ENCODE measurements at regions of chr10 and their contacts with region 1.

Region 1: DNA sequence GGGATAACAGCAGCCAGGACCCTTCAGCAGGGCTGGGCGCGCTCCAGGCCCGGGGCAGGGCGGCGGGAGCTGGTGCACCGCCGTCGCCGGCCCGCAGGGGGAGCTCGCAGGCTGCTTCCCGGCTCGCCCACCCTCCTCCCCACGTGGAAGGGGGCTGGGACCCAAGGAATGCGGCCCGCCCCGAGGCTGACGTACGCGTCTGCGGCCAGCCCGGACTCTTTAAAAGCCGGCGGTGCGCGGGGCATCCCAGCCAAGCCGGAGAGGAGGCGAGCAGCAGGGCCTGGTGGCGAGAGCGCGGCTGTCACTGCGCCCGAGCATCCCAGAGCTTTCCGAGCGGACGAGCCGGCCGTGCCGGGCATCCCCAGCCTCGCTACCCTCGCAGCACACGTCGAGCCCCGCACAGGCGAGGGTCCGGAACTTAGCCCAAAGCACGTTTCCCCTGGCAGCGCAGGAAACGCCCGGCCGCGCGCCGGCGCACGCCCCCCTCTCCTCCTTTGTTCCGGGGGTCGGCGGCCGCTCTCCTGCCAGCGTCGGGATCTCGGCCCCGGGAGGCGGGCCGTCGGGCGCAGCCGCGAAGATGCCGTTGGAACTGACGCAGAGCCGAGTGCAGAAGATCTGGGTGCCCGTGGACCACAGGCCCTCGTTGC is at the start of gene PFKFB3:
- DNase-seq: peak; percentile 66 to 99 (median 77)
- ATAC-seq: peak; percentile 81
- H3K4me3 ChIP-seq: peak within 1 kb of the TSS; percentile 84
- H3K4me3 Mint-ChIP-seq: peak within 1 kb of the TSS; percentile 92 to 100 (median 97)
- H3K27ac ChIP-seq: peak within 1 kb of the TSS; percentile 70
- H3K27ac Mint-ChIP-seq: peak within 1 kb of the TSS; percentile 81 to 97 (median 93)
- H3K4me1 ChIP-seq: peaks cover 0 to 12% of the 10 kb centered on the region in 2 donors
- H3K4me1 Mint-ChIP-seq: peaks cover 14 to 44% (median 35%) of the 10 kb centered on the region in 7 donors
- H3K27me3 ChIP-seq: no peaks in the 10 kb centered on the region
- H3K27me3 Mint-ChIP-seq: no peaks in the 10 kb centered on the region
- total RNA-seq, gene PFKFB3: 65.9 to 129 (median 80.5) TPM

Region 2: GRCh38 chr10:6014241-6014761 is 188.5 kb before region 1 on chr10:
- CTCF ChIA-PET with region 1: interaction called, 3 read pairs
- POLR2A ChIA-PET with region 1: no interaction called
- intact Hi-C with region 1: loop called in 1 of 2 experiments (anchors 10 kb)
- DNase-seq: peak in 7 of 9 donors; percentile 73 to 89 (median 86)
- ATAC-seq: peak; percentile 98
- H3K4me3 ChIP-seq: no peak overlapping the region
- H3K4me3 Mint-ChIP-seq: peak overlapping the region in 9 of 10 donors; percentile 5 to 61 (median 36)
- H3K27ac ChIP-seq: peak overlapping the region; percentile 82
- H3K27ac Mint-ChIP-seq: peak overlapping the region; percentile 85 to 99 (median 96)
- H3K4me1 ChIP-seq: peaks cover 9 to 15% of the 10 kb centered on the region in 2 donors
- H3K4me1 Mint-ChIP-seq: peaks cover 3 to 55% (median 25%) of the 10 kb centered on the region in 7 donors
- H3K27me3 ChIP-seq: no peaks in the 10 kb centered on the region
- H3K27me3 Mint-ChIP-seq: no peaks in the 10 kb centered on the region

Region 3: GRCh38 chr10:6144406-6145165 is 58.2 kb before region 1 on chr10:
- CTCF ChIA-PET with region 1: interaction called, 5 read pairs
- POLR2A ChIA-PET with region 1: interaction called, 4 read pairs
- intact Hi-C with region 1: loop called (anchors 1 kb)
- DNase-seq: peak; percentile 79 to 92 (median 85)
- ATAC-seq: peak; percentile 94
- H3K4me3 ChIP-seq: peak overlapping the region; percentile 92
- H3K4me3 Mint-ChIP-seq: peak overlapping the region; percentile 81 to 92 (median 87)
- H3K27ac ChIP-seq: peak overlapping the region; percentile 86
- H3K27ac Mint-ChIP-seq: peak overlapping the region; percentile 74 to 91 (median 84)
- H3K4me1 ChIP-seq: peaks cover 24 to 39% of the 10 kb centered on the region in 2 donors
- H3K4me1 Mint-ChIP-seq: peaks cover 48 to 68% (median 60%) of the 10 kb centered on the region in 7 donors
- H3K27me3 ChIP-seq: no peaks in the 10 kb centered on the region
- H3K27me3 Mint-ChIP-seq: peaks cover 0 to 1% (median 0%) of the 10 kb centered on the region in 5 donors

Region 4: DNA sequence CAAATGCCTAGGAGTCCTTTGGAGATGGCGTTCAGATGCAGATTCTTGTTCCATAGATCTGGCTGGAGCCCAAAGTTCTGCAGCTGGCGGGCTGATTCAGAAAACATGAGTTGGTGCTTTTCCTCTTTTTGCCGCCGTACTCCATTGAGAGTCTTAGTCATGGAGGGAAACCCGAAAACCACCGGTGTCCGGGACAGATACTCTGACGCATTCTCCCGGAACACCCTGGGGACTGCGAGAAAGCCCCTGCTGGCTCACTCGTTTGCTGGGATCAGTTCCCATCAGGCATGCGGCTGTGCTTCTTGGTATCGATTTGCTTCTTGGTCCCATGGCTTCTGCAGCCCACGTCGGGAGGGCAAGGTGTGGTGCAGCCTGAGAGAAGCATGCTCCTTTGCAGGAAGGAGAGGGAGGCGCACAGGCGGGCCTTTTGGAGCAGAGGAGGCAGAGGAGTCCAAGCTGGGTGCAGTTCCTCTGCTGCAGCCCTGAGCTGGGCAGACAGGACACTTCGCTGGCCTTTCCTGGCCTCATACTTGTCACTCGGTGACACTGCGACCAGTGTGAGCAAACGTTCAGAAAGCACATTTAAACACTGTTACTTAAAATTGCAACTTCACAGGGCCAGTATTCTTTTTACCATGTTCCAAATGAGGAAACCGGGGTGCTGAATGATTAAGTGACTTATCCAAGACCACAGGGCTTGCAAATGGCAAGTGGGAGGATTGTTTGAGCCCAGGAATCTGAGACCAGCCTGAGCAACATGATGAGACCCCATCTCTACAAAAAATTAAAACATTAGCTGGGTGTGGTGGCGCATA is 30.7 kb before region 1 on chr10:
- CTCF ChIA-PET with region 1: interaction called, 44 read pairs
- POLR2A ChIA-PET with region 1: interaction called, 30 read pairs
- intact Hi-C with region 1: loop called (anchors 1 kb)
- DNase-seq: peak in 1 of 9 donors; percentile 54
- ATAC-seq: peak; percentile 75
- H3K4me3 ChIP-seq: no peak overlapping the region
- H3K4me3 Mint-ChIP-seq: peak overlapping the region in 9 of 10 donors; percentile 21 to 74 (median 43)
- H3K27ac ChIP-seq: peak overlapping the region; percentile 3
- H3K27ac Mint-ChIP-seq: peak overlapping the region; percentile 65 to 94 (median 89)
- H3K4me1 ChIP-seq: peaks cover 9 to 46% of the 10 kb centered on the region in 2 donors
- H3K4me1 Mint-ChIP-seq: peaks cover 67 to 94% (median 88%) of the 10 kb centered on the region in 7 donors
- H3K27me3 ChIP-seq: no peaks in the 10 kb centered on the region
- H3K27me3 Mint-ChIP-seq: no peaks in the 10 kb centered on the region

Region 5: GRCh38 chr10:6320320-6321010 is 117.7 kb after region 1 on chr10:
- CTCF ChIA-PET with region 1: no interaction called
- POLR2A ChIA-PET with region 1: no interaction called
- intact Hi-C with region 1: no loop called
- DNase-seq: no peak
- ATAC-seq: no peak
- H3K4me3 ChIP-seq: no peak overlapping the region
- H3K4me3 Mint-ChIP-seq: no peak overlapping the region
- H3K27ac ChIP-seq: no peak overlapping the region
- H3K27ac Mint-ChIP-seq: no peak overlapping the region
- H3K4me1 ChIP-seq: no peaks in the 10 kb centered on the region
- H3K4me1 Mint-ChIP-seq: peaks cover 0 to 3% (median 0%) of the 10 kb centered on the region in 7 donors
- H3K27me3 ChIP-seq: no peaks in the 10 kb centered on the region
- H3K27me3 Mint-ChIP-seq: no peaks in the 10 kb centered on the region

Region 6: DNA sequence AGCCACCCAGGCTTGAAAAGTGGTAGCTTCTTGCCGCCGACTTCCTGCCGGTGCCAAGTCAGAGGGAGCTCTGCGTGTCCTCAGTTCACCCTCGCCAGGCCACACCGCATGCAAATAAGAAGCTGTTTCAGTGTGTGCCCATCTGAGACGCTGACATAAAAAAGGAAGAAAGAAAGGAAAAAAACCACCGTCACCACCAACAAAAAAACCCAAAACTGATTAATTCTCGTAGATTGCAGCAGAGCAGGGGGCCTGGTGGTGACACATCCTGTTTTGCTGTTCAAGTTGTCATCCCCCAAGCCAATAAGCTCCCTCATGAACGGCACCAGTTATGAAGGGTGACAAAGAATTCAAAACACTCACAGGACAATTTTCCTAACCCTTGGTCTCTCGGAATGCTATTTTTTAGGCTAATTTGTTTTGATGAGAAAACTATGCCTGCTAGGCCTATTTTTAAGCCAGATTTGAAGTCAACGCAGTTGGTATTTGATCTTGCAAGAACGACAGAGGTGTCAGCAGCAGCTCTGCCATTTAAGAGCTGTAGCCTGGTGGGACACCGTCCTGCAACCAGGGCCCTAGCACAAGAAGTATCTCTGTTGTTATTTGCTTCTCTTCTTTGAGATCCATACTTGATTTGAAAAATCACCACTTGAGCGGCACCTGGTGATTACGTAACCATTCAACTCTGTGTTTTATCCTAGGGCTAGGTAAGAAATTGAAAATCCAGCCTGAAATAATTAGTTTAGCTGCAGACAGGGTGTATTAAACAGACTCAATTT is 145.5 kb after region 1 on chr10:
- CTCF ChIA-PET with region 1: interaction called, 8 read pairs
- POLR2A ChIA-PET with region 1: interaction called, 28 read pairs
- intact Hi-C with region 1: loop called (anchors 1 kb)
- DNase-seq: peak; percentile 41 to 96 (median 93)
- ATAC-seq: peak; percentile 95
- H3K4me3 ChIP-seq: peak overlapping the region; percentile 54
- H3K4me3 Mint-ChIP-seq: peak overlapping the region; percentile 78 to 88 (median 82)
- H3K27ac ChIP-seq: peak overlapping the region; percentile 79
- H3K27ac Mint-ChIP-seq: peak overlapping the region; percentile 91 to 99 (median 96)
- H3K4me1 ChIP-seq: peaks cover 25 to 34% of the 10 kb centered on the region in 2 donors
- H3K4me1 Mint-ChIP-seq: peaks cover 40 to 77% (median 57%) of the 10 kb centered on the region in 7 donors
- H3K27me3 ChIP-seq: no peaks in the 10 kb centered on the region
- H3K27me3 Mint-ChIP-seq: no peaks in the 10 kb centered on the region

Region 7: DNA sequence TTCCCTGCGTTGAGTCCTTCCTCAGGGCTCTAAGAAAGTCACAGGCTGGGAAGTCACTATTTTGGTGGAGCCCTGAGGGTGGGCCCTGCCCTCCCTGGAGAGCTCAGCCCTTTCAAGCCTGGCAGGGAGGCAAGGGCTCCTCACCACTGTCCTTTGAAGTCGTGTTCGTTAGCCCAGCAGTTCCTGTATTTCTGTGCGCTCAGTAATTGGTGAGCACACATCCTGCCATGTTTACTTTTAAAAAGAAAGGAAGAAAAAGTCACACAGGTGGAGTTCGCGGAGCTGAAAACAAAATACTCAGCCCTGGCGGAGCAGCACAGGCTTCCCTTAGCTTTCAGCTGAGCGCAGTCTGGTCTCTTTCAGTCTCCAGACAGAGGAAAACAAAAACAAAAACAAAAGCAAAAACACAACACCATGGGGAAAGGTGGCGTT is 340.2 kb after region 1 on chr10:
- CTCF ChIA-PET with region 1: no interaction called
- POLR2A ChIA-PET with region 1: no interaction called
- intact Hi-C with region 1: loop called in 1 of 2 experiments (anchors 2 kb)
- DNase-seq: peak in 8 of 9 donors; percentile 45 to 83 (median 78)
- ATAC-seq: peak; percentile 90
- H3K4me3 ChIP-seq: peak overlapping the region; percentile 64
- H3K4me3 Mint-ChIP-seq: peak overlapping the region; percentile 79 to 95 (median 88)
- H3K27ac ChIP-seq: peak overlapping the region; percentile 73
- H3K27ac Mint-ChIP-seq: peak overlapping the region; percentile 97 to 100 (median 99)
- H3K4me1 ChIP-seq: peaks cover 55 to 66% of the 10 kb centered on the region in 2 donors
- H3K4me1 Mint-ChIP-seq: peaks cover 43 to 90% (median 76%) of the 10 kb centered on the region in 7 donors
- H3K27me3 ChIP-seq: no peaks in the 10 kb centered on the region
- H3K27me3 Mint-ChIP-seq: no peaks in the 10 kb centered on the region

Region 8: GRCh38 chr10:6678211-6678803 is 475.5 kb after region 1 on chr10:
- CTCF ChIA-PET with region 1: interaction called, 4 read pairs
- POLR2A ChIA-PET with region 1: no interaction called
- intact Hi-C with region 1: loop called in 1 of 2 experiments (anchors 1 kb)
- DNase-seq: peak in 8 of 9 donors; percentile 24 to 55 (median 48)
- ATAC-seq: peak; percentile 56
- H3K4me3 ChIP-seq: no peak overlapping the region
- H3K4me3 Mint-ChIP-seq: no peak overlapping the region
- H3K27ac ChIP-seq: no peak overlapping the region
- H3K27ac Mint-ChIP-seq: no peak overlapping the region
- H3K4me1 ChIP-seq: no peaks in the 10 kb centered on the region
- H3K4me1 Mint-ChIP-seq: peaks cover 0 to 12% (median 0%) of the 10 kb centered on the region in 7 donors
- H3K27me3 ChIP-seq: no peaks in the 10 kb centered on the region
- H3K27me3 Mint-ChIP-seq: peaks cover 0 to 66% (median 0%) of the 10 kb centered on the region in 5 donors